Common myeloid progenitor, CD34-positive (primary cell): ENCODE measurements at regions of chr15 and their contacts with region 1.

Region 1: DNA sequence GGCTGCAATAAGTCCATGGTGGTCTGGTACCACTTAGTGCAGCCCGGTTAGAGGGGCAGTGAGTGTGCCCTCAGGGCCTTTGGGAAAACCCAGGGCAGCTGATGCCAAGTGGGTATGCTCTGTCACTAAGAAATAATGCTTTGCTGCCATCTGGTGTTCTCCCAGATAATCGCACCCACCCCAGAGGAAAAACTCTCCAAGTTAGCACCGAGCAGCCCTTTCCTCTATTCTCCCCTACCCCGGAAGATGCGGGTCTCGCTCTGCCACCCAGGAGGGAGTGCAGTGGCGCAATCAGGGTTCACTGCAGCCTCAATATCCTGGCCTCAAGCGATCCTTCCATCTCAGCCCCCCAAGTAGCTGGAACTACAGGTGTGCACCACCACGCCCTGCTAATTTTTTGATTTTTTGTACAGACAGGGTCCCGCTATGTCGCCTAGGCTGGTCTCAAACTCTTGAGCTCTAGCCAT is 21.3 kb upstream of the DAPK2 start:
- DNase-seq: peak; percentile 66 to 79 (median 69)
- H3K4me3 ChIP-seq: peak overlapping the region in 1 of 7 experiments; percentile 34
- H3K27ac ChIP-seq: no peak overlapping the region
- H3K4me1 ChIP-seq: peaks cover 0 to 7% (median 3%) of the 10 kb centered on the region in 4 experiments
- H3K27me3 ChIP-seq: no peaks in the 10 kb centered on the region

Region 2: DNA sequence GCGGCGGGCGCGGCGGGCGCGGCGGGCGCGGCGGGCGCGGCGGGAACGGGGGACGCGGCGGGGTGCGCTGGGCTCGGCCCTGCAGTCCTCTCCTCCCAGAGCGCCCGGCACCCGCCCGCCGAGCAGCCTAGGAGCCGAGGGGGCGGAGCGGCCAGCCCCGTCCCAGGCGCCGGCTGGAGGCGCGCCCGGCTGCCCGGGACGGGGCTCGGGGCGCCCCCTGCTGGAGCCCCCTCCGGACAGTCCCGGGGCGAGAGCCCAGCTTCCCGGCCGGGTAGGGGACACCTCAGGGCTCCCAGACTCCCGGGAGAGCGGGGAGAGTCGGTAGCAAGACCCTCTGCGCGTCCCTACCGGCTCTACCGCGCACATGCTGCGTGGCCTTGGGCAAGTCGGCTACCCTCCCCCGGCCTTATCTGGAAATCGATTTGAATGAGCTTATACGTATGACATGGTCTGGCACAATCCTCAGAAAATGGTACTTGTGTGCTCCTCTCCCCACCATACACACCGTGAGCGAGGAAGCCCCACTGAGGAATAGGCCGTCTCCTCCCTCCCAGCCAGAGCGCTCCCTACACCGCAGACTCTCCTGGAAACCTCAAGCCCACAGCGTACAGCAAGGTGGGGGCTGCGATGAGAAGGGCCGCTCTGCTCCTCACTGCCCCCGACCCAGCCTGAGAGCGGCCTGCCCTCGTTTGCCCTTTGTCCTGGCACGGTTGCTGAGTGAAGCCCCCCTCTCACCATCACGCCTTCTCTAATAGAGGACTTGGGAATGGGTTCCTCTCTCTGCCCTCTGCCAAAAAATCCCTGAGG is 21.0 kb before region 1 on chr15 and contains the start of gene DAPK2:
- CTCF ChIA-PET with region 1: interaction called, 14 read pairs
- POLR2A ChIA-PET with region 1: no interaction called
- DNase-seq: peak; percentile 41 to 62 (median 55)
- H3K4me3 ChIP-seq: peak within 1 kb of the TSS; percentile 28 to 78 (median 62)
- H3K27ac ChIP-seq: no peak within 1 kb of the TSS
- H3K4me1 ChIP-seq: peaks cover 10 to 46% (median 27%) of the 10 kb centered on the region in 4 experiments
- H3K27me3 ChIP-seq: peaks cover 0 to 7% (median 6%) of the 10 kb centered on the region in 5 experiments

Region 3: GRCh38 chr15:64082757-64083156 is 15.2 kb after region 1 on chr15:
- CTCF ChIA-PET with region 1: interaction called, 15 read pairs
- POLR2A ChIA-PET with region 1: no interaction called
- DNase-seq: no peak
- H3K4me3 ChIP-seq: no peak overlapping the region
- H3K27ac ChIP-seq: no peak overlapping the region
- H3K4me1 ChIP-seq: no peaks in the 10 kb centered on the region
- H3K27me3 ChIP-seq: no peaks in the 10 kb centered on the region